ENCODE measurements at regions of chr11 and their contacts with region 1.

Region 1: DNA sequence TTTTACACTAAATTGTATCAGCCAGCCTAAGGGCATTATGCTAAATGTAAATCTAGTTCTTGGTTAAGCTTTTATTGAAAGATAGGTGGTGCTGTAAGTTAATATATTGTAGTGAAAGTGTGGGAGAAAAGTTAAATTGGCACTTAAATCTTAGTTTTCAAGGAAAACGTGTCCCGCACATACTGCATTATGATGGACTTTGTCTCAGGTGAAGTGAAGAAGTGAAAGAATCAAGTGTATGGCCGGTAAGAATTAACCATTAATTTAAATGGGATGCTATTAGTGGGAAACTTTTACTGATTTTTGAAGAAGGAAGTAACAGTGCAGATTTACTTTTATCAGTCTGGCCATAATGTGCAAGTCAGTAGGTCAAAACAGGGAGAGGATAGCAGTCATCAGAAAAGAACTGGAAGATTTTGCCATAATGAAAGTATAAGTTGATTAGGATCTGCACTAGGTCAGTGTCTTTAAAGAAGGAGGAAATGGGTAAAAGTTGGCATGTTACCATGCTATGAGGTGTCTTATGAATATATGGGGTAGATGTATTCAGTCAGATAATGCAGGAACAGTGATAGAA is 81.6 kb downstream of the PDHX start:
- H3K4me3 Mint-ChIP-seq: peak overlapping the region; percentile 55
- H3K27ac Mint-ChIP-seq: peak overlapping the region; percentile 79
- H3K4me1 Mint-ChIP-seq: peaks cover 20% of the 10 kb centered on the region
- H3K27me3 Mint-ChIP-seq: no peaks in the 10 kb centered on the region

Region 2: GRCh38 chr11:35030716-35031213 is 32.7 kb after region 1 on chr11:
- intact Hi-C with region 1: loop called (anchors 1 kb)
- H3K4me3 Mint-ChIP-seq: peak overlapping the region; percentile 51
- H3K27ac Mint-ChIP-seq: peak overlapping the region; percentile 94
- H3K4me1 Mint-ChIP-seq: peaks cover 78% of the 10 kb centered on the region
- H3K27me3 Mint-ChIP-seq: no peaks in the 10 kb centered on the region

Region 3: DNA sequence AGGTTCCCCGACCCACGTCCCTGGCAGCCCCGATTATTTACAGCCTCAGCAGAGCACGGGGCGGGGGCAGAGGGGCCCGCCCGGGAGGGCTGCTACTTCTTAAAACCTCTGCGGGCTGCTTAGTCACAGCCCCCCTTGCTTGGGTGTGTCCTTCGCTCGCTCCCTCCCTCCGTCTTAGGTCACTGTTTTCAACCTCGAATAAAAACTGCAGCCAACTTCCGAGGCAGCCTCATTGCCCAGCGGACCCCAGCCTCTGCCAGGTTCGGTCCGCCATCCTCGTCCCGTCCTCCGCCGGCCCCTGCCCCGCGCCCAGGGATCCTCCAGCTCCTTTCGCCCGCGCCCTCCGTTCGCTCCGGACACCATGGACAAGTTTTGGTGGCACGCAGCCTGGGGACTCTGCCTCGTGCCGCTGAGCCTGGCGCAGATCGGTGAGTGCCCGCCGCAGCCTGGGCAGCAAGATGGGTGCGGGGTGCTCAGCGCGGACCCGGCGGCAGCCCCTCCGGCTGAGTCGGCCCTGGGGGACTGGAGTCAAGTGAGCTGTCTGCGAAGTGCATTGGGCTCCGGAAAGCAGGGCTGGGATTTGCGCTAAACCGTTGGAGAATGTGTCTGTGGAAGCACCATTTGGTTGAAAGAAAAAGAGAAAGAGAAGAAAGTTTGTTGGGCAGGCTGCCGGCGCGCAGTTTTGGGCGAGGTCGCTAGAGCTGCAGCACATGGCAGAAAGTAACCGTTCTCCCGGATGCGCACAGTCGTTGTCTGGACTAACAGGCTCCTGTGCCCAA is 141.1 kb after region 1 on chr11 and contains the start of gene CD44:
- intact Hi-C with region 1: loop called (anchors 2 kb)
- H3K4me3 Mint-ChIP-seq: peak within 1 kb of the TSS; percentile 87
- H3K27ac Mint-ChIP-seq: peak within 1 kb of the TSS; percentile 91
- H3K4me1 Mint-ChIP-seq: peaks cover 53% of the 10 kb centered on the region
- H3K27me3 Mint-ChIP-seq: no peaks in the 10 kb centered on the region

Region 4: GRCh38 chr11:35391922-35392813 is 394.1 kb after region 1 on chr11:
- intact Hi-C with region 1: loop called (anchors 2 kb)
- H3K4me3 Mint-ChIP-seq: peak overlapping the region; percentile 51
- H3K27ac Mint-ChIP-seq: peak overlapping the region; percentile 65
- H3K4me1 Mint-ChIP-seq: peaks cover 16% of the 10 kb centered on the region
- H3K27me3 Mint-ChIP-seq: peaks cover 1% of the 10 kb centered on the region